ENCODE measurements at regions of chr9 and their contacts with region 1.

Region 1: DNA sequence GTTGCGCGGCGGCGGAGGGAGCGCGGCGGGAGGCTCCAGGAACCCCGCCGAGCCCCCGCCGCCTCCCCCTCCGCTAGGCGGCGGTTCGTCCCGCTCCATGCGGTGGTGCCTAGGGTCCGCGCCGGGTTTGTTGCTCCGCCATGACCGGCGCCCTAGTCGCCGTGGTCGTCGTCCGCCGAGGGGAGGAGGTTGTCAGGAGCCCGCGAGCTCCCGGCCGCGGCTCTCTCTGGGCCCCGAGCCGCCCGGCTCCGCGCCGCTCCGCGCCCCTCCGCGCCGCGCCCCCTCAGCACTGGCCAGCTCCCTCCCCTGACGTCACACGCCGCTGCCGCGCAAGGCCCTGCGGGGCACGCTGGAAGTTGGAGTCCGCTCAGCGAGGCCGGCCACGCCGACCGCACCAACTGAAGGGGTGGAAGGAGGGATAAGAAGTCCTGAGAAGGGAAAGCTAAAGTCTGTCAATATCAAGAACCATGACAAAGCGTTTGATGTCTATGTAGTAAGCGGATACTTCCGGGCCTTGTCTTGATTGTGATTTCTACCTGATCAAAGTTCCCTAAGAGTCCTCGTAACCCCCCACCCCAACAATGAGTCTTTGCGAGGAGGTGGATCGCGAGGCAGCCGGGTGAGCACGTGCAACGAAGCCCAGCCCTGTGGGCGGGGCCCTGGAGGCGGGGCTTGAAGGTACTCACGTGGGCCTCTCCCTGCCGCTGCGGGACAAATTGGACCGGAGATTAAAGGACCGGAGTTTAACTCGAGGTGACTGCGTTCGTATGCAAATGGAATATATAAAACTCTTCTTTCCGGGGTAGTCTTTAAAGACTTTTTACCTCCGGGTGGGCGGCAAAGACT is at the start of gene NR6A1:
- DNase-seq: peak; percentile 96
- H3K4me3 ChIP-seq: peak within 1 kb of the TSS; percentile 29 to 62 (median 54)
- H3K27ac ChIP-seq: peak within 1 kb of the TSS; percentile 69
- H3K4me1 ChIP-seq: peaks cover 10% of the 10 kb centered on the region
- H3K27me3 ChIP-seq: peaks cover 36 to 42% of the 10 kb centered on the region in 2 experiments
- CTCF ChIP-seq: peak; percentile 26 to 36
- POLR2A ChIP-seq: no peak
- total RNA-seq, gene NR6A1: 0.32 and 1.2 TPM in 2 replicates

Region 2: GRCh38 chr9:124754289-124754688 is 17.0 kb before region 1 on chr9:
- CTCF ChIA-PET with region 1: interaction called, 16 read pairs
- POLR2A ChIA-PET with region 1: no interaction called
- dilution Hi-C with region 1: no loop called
- intact Hi-C with region 1: no loop called
- DNase-seq: peak; percentile 33
- H3K4me3 ChIP-seq: no peak overlapping the region
- H3K27ac ChIP-seq: no peak overlapping the region
- H3K4me1 ChIP-seq: no peaks in the 10 kb centered on the region
- H3K27me3 ChIP-seq: peaks cover 30 to 52% of the 10 kb centered on the region in 2 experiments
- CTCF ChIP-seq: peak in 1 of 2 donors; percentile 34
- POLR2A ChIP-seq: no peak

Region 3: GRCh38 chr9:124839612-124840299 is 68.5 kb after region 1 on chr9:
- CTCF ChIA-PET with region 1: interaction called, 967 read pairs
- POLR2A ChIA-PET with region 1: no interaction called
- dilution Hi-C with region 1: no loop called
- intact Hi-C with region 1: no loop called
- DNase-seq: peak; percentile 62
- H3K4me3 ChIP-seq: no peak overlapping the region
- H3K27ac ChIP-seq: no peak overlapping the region
- H3K4me1 ChIP-seq: peaks cover 6% of the 10 kb centered on the region
- H3K27me3 ChIP-seq: no peaks in the 10 kb centered on the region
- CTCF ChIP-seq: peak; percentile 41 to 73
- POLR2A ChIP-seq: no peak

Region 4: DNA sequence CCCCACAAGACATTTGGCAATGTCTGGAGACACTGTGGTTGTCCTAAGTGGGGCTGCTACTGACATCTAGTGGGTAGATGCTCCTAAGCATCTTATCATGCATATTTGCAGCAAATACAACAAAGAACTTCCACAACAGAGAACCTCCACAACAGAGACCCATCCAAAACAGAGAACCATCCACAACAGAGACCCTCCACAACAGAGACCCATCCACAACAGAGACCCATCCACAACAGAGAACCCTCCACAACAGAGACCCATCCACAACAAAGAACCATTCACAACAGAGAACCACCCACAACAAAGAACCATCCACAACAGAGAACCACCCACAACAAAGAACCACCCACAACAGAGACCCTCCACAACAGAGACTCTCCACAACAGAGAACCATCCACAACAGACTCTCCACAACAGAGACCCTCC is 123.5 kb after region 1 on chr9:
- CTCF ChIA-PET with region 1: interaction called, 8 read pairs
- POLR2A ChIA-PET with region 1: no interaction called
- dilution Hi-C with region 1: no loop called
- intact Hi-C with region 1: loop called (anchors 1 kb)
- DNase-seq: peak; percentile 57
- H3K4me3 ChIP-seq: no peak overlapping the region
- H3K27ac ChIP-seq: no peak overlapping the region
- H3K4me1 ChIP-seq: no peaks in the 10 kb centered on the region
- H3K27me3 ChIP-seq: no peaks in the 10 kb centered on the region
- CTCF ChIP-seq: peak; percentile 43 to 58
- POLR2A ChIP-seq: no peak

Region 5: DNA sequence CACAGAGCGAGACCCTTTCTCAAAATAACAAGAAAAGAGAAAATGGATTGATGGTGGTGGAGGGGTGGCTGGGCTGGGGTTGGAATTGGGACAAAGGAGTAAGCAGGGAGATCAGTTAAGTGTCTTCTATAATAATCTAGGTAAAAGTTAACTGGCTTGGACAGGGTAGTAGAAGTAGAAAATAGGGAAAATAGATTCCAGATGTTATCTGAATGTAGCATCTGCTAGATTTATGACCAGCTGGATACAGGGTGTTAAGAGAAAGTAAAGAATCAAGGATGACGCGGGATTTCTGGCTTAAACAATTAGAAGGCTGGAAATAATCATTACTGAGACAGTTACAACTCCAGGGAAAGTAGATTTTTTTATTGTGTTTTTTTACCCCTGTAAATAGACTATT is 405.4 kb after region 1 on chr9:
- CTCF ChIA-PET with region 1: no interaction called
- POLR2A ChIA-PET with region 1: no interaction called
- dilution Hi-C with region 1: no loop called
- intact Hi-C with region 1: no loop called
- DNase-seq: no peak
- H3K4me3 ChIP-seq: no peak overlapping the region
- H3K27ac ChIP-seq: no peak overlapping the region
- H3K4me1 ChIP-seq: peaks cover 10% of the 10 kb centered on the region
- H3K27me3 ChIP-seq: no peaks in the 10 kb centered on the region
- CTCF ChIP-seq: no peak
- POLR2A ChIP-seq: no peak

Region 6: DNA sequence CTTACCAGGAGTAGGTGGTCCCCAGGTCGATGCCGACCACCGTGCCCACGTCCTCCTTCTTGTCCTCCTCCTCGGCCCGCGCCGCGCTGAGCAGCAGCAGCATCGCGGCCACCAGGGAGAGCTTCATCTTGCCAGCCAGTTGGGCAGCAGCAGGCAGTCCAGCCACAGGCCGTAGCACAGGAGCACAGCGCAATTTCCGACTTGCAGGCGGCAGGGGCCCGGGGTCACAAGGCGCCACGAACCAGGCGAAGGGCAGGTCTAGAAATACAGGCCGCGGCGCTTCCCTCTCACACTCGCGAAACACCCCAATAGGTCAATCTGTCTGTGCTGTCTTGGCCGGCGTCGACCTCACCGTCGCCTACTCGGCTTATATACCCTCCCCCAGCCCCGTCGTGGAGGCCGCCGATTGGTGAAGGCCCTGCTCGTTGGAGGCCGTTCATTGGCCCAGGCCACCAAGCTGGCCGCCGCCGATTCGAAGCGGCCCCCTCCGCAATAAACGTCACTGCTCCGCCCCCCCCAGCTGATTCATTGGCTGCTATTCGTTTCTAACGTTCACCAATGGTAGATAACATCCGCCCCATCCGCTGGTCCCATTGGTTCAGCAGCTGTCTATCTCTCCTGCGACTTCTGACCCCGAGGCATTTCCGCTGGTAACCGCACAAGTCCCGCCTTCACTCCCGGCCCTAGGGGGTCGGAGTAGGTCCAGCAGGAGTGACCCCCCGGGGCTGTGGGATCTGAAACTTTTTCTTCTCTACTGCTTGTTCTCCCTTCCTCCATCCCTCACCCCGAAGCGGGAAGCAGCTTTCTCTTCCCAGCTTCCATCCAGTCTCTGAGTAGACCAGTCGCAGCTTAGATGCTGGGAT is 470.0 kb after region 1 on chr9 and contains the start of gene HSPA5:
- CTCF ChIA-PET with region 1: no interaction called
- POLR2A ChIA-PET with region 1: no interaction called
- dilution Hi-C with region 1: no loop called
- intact Hi-C with region 1: loop called (anchors 5 kb)
- DNase-seq: peak; percentile 100
- H3K4me3 ChIP-seq: peak within 1 kb of the TSS; percentile 77 to 97 (median 96)
- H3K27ac ChIP-seq: peak within 1 kb of the TSS; percentile 89
- H3K4me1 ChIP-seq: peaks cover 43% of the 10 kb centered on the region
- H3K27me3 ChIP-seq: no peaks in the 10 kb centered on the region
- CTCF ChIP-seq: peak in 1 of 2 donors; percentile 22
- POLR2A ChIP-seq: peak; percentile 100
- total RNA-seq, gene HSPA5: 514 and 538 TPM in 2 replicates

Measured in endothelial cell of umbilical vein (primary cell).